Ascending aorta (tissue), 2 donors: ENCODE measurements at regions of chr17 and their contacts with region 1.

Region 1: DNA sequence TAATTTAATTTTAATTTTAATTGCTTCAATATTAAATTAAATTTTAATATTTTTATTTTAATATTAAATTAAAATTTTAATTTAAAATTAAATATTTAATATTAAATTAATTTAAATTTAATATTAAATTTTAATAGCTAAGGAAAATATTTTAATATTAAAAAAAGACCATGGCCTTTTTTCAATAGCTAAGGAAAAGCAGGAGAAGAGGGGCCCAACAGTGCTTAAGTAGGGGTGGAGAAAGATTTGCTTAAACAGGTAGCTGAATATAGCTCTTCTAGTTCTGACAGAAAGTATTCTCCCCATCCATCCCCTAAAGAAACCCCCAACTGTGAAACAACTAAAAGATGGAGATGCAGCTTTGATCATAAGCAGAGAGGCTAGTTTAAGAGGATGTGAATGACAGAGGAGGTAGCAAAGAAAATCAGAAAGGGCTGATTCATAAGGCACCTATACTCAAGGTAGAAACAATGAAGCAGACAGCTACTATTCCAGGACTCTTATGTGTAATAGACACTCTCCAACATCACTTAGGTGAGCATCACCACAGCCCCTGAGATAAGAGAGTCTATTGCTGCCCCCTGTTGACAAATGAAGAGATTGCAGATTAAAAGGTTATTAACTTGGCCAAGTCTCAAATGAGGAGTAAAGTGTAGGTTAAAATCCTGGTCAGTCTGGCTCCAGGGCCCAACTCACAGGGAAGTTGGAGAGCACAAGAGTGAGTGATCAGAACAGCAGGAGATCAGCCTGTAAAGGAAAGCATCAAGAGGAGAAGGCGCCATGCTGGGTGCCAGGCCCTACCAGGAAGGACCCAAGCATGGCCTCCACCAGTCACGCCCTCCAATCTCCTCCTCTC is 7.8 kb upstream of the RNASEK start:
- DNase-seq: no peak
- H3K4me3 ChIP-seq: no peak overlapping the region
- H3K27ac ChIP-seq: no peak overlapping the region
- H3K4me1 ChIP-seq: no peaks in the 10 kb centered on the region
- H3K27me3 ChIP-seq: no peaks in the 10 kb centered on the region
- CTCF ChIP-seq: peak; percentile 47 to 60 (median 48)

Region 2: DNA sequence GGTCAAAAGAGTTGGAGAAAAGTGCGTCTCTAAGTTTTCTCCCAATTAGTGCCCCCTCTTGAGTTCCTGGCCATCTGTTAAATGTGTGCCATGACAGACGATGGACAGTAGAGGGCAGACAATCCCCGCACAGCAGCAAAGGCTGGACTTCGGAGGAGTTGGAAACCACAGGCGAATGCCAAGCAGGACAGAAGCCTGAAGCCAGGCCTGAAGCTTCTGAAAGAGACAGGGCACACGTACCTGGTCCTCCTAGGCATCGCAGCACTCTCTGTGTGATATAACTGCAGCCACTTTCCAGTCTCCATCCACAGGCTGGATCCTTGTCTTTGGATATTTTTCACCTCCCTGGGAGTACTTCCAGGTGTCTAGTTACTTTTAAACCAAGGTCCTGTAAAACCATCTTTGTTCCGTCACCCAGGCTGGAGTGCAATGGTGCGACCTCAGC is 338.5 kb before region 1 on chr17:
- intact Hi-C with region 1: loop called (anchors 5 kb)
- DNase-seq: peak in 1 of 2 donors; percentile 83
- H3K4me3 ChIP-seq: no peak overlapping the region
- H3K27ac ChIP-seq: no peak overlapping the region
- H3K4me1 ChIP-seq: no peaks in the 10 kb centered on the region
- H3K27me3 ChIP-seq: no peaks in the 10 kb centered on the region
- CTCF ChIP-seq: peak; percentile 76 to 92 (median 83)

Region 3: GRCh38 chr17:6913608-6914443 is 90.8 kb before region 1 on chr17:
- intact Hi-C with region 1: loop called (anchors 1 kb)
- DNase-seq: peak in 1 of 2 donors; percentile 77
- H3K4me3 ChIP-seq: peak overlapping the region; percentile 30 to 52
- H3K27ac ChIP-seq: no peak overlapping the region
- H3K4me1 ChIP-seq: peaks cover 2 to 4% of the 10 kb centered on the region in 2 donors
- H3K27me3 ChIP-seq: no peaks in the 10 kb centered on the region
- CTCF ChIP-seq: peak; percentile 66 to 86 (median 75)

Region 4: GRCh38 chr17:6948562-6948961 is 56.1 kb before region 1 on chr17:
- intact Hi-C with region 1: no loop called
- DNase-seq: no peak
- H3K4me3 ChIP-seq: no peak overlapping the region
- H3K27ac ChIP-seq: no peak overlapping the region
- H3K4me1 ChIP-seq: no peaks in the 10 kb centered on the region
- H3K27me3 ChIP-seq: no peaks in the 10 kb centered on the region
- CTCF ChIP-seq: no peak

Region 5: GRCh38 chr17:7021993-7022778 is 17.6 kb after region 1 on chr17:
- intact Hi-C with region 1: no loop called
- DNase-seq: peak in 1 of 2 donors; percentile 89
- H3K4me3 ChIP-seq: peak overlapping the region; percentile 31 to 56
- H3K27ac ChIP-seq: peak overlapping the region; percentile 61 to 75
- H3K4me1 ChIP-seq: peaks cover 10 to 28% of the 10 kb centered on the region in 2 donors
- H3K27me3 ChIP-seq: peaks cover 14% of the 10 kb centered on the region
- CTCF ChIP-seq: peak; percentile 91 to 98 (median 94)